HAP-1 (cell line): ENCODE measurements at regions of chr12 and their contacts with region 1.

Region 1: GRCh38 chr12:122500685-122501488 is at the start of gene ZCCHC8:
- DNase-seq: peak; percentile 98 to 99
- H3K4me3 ChIP-seq: peak within 1 kb of the TSS; percentile 86
- H3K4me1 ChIP-seq: peaks cover 10% of the 10 kb centered on the region
- H3K27me3 ChIP-seq: no peaks in the 10 kb centered on the region

Region 2: DNA sequence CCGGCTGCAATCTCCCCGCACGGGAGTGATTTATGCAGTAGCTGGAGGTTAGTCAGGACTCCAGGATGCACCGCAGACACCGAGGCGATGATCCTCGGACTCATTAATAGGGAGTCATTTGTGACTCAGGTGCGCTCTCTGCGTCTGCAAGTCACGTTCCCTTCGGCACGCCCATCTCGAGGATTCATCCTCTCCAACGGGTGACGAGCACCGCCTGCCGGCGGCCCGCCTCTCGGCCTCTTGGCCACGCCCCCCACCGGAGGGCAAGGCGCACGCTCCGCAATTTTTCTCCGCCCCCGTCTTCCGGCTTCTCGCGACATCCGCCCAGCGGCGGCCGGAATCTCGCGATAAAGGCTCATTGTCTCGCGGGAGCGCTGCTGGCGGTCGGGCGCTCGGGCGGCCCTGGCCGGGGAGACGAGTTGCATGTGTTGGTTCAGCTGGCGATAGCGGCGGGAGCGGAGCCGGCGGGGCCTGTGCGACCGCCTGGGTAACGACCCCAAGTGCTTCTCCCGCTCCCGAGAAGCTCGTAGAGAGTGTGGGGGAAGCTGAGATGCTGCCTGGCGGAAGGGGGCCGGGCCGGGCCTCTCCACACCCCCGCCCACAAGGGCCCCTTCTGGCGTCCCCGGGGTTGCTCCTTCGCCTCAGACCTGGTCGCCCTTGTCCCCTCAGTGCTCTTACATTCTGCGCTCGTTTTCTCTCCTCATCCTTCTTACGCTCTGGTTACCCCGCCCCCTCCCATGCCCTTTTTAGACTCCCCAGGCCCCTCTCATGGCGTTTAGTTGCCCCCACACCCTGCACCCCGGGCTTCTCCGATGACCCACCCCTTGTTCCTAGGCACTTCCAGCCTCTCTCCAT is 251.8 kb after region 1 on chr12 and contains the start of gene DENR:
- in situ Hi-C with region 1: loop called (anchors 25 kb)
- DNase-seq: peak; percentile 96 to 99
- H3K4me3 ChIP-seq: peak within 1 kb of the TSS; percentile 97
- H3K4me1 ChIP-seq: peaks cover 41% of the 10 kb centered on the region
- H3K27me3 ChIP-seq: no peaks in the 10 kb centered on the region

Region 3: GRCh38 chr12:123305136-123305535 is 804.2 kb after region 1 on chr12:
- in situ Hi-C with region 1: loop called (anchors 25 kb)
- DNase-seq: no peak
- H3K4me3 ChIP-seq: no peak overlapping the region
- H3K4me1 ChIP-seq: no peaks in the 10 kb centered on the region
- H3K27me3 ChIP-seq: no peaks in the 10 kb centered on the region